GM12878 (cell line): ENCODE measurements at regions of chr17 and their contacts with region 1.

Region 1: DNA sequence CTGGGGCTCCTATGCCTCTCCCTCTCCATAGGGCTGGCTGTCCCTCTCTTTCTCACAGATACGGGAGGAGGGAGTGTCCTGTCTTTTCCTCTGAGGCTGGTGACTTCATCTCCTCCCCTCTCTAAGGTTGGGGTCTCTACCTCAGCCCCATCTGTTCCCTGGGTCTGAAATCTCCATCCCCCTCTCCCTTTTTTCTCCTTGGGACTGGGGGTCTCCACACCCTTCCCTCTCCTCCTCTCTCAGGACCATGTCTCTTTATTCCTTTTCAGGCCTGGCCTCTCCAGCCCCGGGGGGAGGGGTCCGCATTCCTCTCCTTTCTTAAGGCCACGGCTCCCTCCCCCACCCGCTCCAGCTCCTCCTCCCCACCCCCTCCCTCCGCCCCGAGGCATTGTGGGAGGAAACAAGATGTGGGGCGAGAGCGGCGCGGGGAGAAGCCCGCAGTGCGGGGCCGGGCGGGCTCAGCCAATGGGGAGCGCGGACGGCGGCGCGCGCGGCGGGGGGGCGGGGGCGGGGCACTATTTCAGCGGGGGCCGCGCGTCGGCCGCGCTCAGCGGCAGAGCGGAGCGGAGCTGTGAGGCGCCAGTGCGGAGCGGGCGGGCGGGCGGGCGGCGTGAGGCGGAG is at the start of gene DYNLL2:
- DNase-seq: peak; percentile 25
- ATAC-seq: peak; percentile 87
- H3K4me3 ChIP-seq: peak within 1 kb of the TSS; percentile 78
- H3K27ac ChIP-seq: peak within 1 kb of the TSS; percentile 76
- H3K4me1 ChIP-seq: peaks cover 15% of the 10 kb centered on the region
- H3K27me3 ChIP-seq: peaks cover 0 to 9% of the 10 kb centered on the region in 2 experiments; a peak in 1 of 4 replicates
- CTCF ChIP-seq: no peak
- EP300 ChIP-seq: no peak
- POLR2A ChIP-seq: no peak
- RAD21 ChIP-seq: no peak
- polyA plus RNA-seq, gene DYNLL2: 1.9 to 2.8 TPM

Region 2: GRCh38 chr17:58006924-58007780 is 75.8 kb before region 1 on chr17 and contains the start of gene SRSF1:
- CTCF ChIA-PET with region 1: no interaction called
- POLR2A ChIA-PET with region 1: interaction called, 21 read pairs
- RAD21 ChIA-PET with region 1: interaction called, 8 read pairs
- SMC1A ChIA-PET with region 1: interaction called, 5 read pairs
- in situ Hi-C with region 1: no loop called
- intact Hi-C with region 1: loop called (anchors 2 kb)
- DNase-seq: peak; percentile 97
- ATAC-seq: peak; percentile 91
- H3K4me3 ChIP-seq: peak within 1 kb of the TSS; percentile 98
- H3K27ac ChIP-seq: peak within 1 kb of the TSS; percentile 96
- H3K4me1 ChIP-seq: peaks cover 8% of the 10 kb centered on the region; the same call in 1 of the 2 replicates
- H3K27me3 ChIP-seq: no peaks in the 10 kb centered on the region
- CTCF ChIP-seq: no peak
- EP300 ChIP-seq: peak in 1 of 2 experiments; percentile 62; a peak in 2 of 4 replicates
- POLR2A ChIP-seq: peak; percentile 99
- RAD21 ChIP-seq: no peak
- polyA plus RNA-seq, gene SRSF1: 101 to 104 TPM